ENCODE measurements at regions of chr7 and their contacts with region 1.

Region 1: DNA sequence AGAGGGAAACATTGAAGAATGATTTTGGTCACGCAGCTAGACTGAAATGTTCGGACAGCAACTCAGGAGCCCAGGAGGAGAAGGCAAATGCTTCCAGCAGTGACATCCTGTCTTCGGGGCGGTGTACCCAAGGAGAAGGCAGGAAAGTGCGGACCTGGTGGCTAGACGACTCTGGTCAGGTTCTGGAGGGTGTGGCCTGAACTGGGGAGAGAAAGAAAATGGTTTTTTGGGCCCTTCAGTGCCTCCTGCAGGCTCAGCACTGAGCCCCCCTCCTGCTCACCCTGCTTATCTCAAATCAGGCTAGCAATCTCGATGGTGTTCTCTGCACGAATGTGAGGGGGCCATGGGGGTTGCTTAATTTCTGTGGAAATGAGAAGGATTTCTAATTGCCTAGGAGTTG is 26.7 kb upstream of the TARP start:
- DNase-seq: no peak
- H3K4me3 ChIP-seq: no peak overlapping the region
- H3K4me3 Mint-ChIP-seq: peak overlapping the region; percentile 76 to 89 (median 86)
- H3K27ac ChIP-seq: peak overlapping the region; percentile 15
- H3K27ac Mint-ChIP-seq: peak overlapping the region in 5 of 7 donors; percentile 60 to 81 (median 66)
- H3K4me1 ChIP-seq: no peaks in the 10 kb centered on the region
- H3K4me1 Mint-ChIP-seq: peaks cover 0 to 7% (median 2%) of the 10 kb centered on the region in 4 donors
- H3K27me3 ChIP-seq: no peaks in the 10 kb centered on the region
- H3K27me3 Mint-ChIP-seq: no peaks in the 10 kb centered on the region

Region 2: DNA sequence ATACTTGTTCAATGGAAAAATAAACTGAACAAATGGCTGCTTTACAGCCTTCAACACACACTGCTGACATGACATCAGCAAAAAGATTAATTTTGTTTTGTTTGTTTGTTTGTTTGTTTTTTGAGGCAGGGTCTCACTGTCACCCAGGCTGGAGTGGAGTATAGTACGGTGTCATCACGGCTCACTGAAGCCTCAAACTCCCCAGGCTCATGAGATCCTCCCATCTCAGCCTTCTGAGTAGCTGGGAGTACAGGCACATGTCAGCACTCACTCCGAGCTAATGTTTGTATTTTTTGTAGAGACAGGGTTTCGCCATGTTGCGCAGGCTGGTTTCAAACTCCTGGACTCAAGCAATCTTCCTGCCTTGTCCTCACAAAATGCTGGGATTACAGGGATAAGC is 37.6 kb before region 1 on chr7:
- CTCF ChIA-PET with region 1: no interaction called
- POLR2A ChIA-PET with region 1: no interaction called
- intact Hi-C with region 1: loop called (anchors 5 kb)
- DNase-seq: no peak
- H3K4me3 ChIP-seq: no peak overlapping the region
- H3K4me3 Mint-ChIP-seq: peak overlapping the region in 3 of 8 donors; percentile 9 to 24 (median 13)
- H3K27ac ChIP-seq: no peak overlapping the region
- H3K27ac Mint-ChIP-seq: no peak overlapping the region
- H3K4me1 ChIP-seq: no peaks in the 10 kb centered on the region
- H3K4me1 Mint-ChIP-seq: peaks cover 0 to 2% (median 0%) of the 10 kb centered on the region in 4 donors
- H3K27me3 ChIP-seq: no peaks in the 10 kb centered on the region
- H3K27me3 Mint-ChIP-seq: no peaks in the 10 kb centered on the region

Region 3: DNA sequence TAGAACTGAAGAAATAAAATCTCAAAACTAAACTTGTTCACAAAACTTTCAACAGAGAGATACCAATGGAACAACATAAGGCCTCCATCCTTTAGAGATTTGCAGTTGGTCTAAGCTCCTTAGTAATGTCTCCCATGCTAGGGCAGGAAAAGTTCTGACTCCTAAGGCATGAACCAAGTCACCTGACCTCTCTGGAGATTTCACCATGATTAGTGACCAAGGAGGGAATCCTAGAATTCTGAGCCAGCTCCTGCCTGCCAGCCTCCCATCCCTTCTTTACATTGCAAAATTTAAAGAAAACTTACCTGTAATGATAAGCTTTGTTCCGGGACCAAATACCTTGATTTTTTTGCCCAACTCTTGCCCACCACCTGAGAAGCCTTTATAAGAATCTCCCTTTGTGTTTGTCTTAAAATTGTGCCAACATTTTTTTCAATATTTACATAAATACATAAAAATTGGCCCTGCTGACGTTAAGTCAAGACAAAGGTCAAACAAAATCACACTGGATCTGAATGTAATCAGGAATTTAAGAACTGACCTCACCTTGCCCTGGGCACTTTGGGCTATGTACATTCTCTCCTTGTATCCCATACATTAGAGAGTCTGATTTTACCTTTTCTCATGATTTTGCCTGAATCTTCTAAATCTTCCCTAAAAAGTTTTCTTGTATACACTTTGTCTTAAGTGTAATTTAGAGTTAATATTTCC is 26.7 kb before region 1 on chr7 and contains the start of gene TARP:
- CTCF ChIA-PET with region 1: interaction called, 4 read pairs
- POLR2A ChIA-PET with region 1: interaction called, 5 read pairs
- intact Hi-C with region 1: loop called (anchors 2 kb)
- DNase-seq: no peak
- H3K4me3 ChIP-seq: no peak within 1 kb of the TSS
- H3K4me3 Mint-ChIP-seq: peak within 1 kb of the TSS; percentile 3 to 75 (median 58)
- H3K27ac ChIP-seq: no peak within 1 kb of the TSS
- H3K27ac Mint-ChIP-seq: peak within 1 kb of the TSS in 1 of 7 donors; percentile 51
- H3K4me1 ChIP-seq: no peaks in the 10 kb centered on the region
- H3K4me1 Mint-ChIP-seq: no peaks in the 10 kb centered on the region
- H3K27me3 ChIP-seq: no peaks in the 10 kb centered on the region
- H3K27me3 Mint-ChIP-seq: no peaks in the 10 kb centered on the region

Region 4: DNA sequence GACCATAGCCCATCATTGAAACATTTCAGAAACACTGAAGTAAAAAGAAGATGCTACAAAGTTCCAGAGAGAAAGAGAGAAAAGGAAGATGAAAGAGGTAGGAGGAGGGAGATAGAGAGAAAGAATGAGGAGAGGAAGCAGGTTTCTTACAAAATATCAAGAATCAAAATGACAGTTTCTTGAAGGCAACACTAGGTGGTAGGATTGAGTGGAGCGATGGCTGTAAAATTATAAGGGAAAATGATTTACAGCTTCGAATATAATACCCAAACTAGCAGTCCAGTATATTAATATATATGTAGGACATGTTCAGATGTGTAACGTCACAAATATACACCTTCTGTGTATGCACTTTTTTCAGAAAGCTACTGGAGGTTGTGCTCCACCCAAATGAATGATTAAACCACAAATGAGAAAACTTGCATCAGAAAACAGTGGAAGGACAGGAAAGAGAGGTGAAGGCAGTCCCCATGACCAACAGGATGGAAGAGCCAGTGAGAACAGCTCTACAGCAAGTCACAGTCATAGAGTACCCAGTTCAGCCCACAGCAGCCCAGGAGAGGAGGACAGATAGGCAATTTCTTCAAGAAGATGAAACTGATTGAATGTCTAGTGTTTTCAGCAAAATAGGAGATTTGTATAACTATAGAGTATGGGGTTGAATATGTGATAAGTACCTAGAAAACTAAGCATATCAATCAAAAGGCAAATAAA is 124.7 kb after region 1 on chr7:
- CTCF ChIA-PET with region 1: no interaction called
- POLR2A ChIA-PET with region 1: no interaction called
- intact Hi-C with region 1: no loop called
- DNase-seq: peak in 2 of 5 donors; percentile 4 to 7
- H3K4me3 ChIP-seq: no peak overlapping the region
- H3K4me3 Mint-ChIP-seq: peak overlapping the region; percentile 31 to 70 (median 64)
- H3K27ac ChIP-seq: no peak overlapping the region
- H3K27ac Mint-ChIP-seq: peak overlapping the region; percentile 10 to 91 (median 67)
- H3K4me1 ChIP-seq: peaks cover 41% of the 10 kb centered on the region
- H3K4me1 Mint-ChIP-seq: peaks cover 33 to 57% (median 44%) of the 10 kb centered on the region in 4 donors
- H3K27me3 ChIP-seq: no peaks in the 10 kb centered on the region
- H3K27me3 Mint-ChIP-seq: peaks cover 2 to 3% of the 10 kb centered on the region in 2 donors

Measured in CD4-positive, alpha-beta memory T cell (primary cell).